Endothelial cell of umbilical vein (primary cell): ENCODE measurements at regions of chr10 and their contacts with region 1.

Region 1: GRCh38 chr10:103888113-103888841 is 29.7 kb downstream of the STN1 start:
- DNase-seq: peak; percentile 93
- H3K4me3 ChIP-seq: no peak overlapping the region
- H3K27ac ChIP-seq: peak overlapping the region; percentile 33
- H3K4me1 ChIP-seq: peaks cover 22% of the 10 kb centered on the region
- H3K27me3 ChIP-seq: no peaks in the 10 kb centered on the region
- CTCF ChIP-seq: peak; percentile 68 to 73
- POLR2A ChIP-seq: no peak

Region 2: DNA sequence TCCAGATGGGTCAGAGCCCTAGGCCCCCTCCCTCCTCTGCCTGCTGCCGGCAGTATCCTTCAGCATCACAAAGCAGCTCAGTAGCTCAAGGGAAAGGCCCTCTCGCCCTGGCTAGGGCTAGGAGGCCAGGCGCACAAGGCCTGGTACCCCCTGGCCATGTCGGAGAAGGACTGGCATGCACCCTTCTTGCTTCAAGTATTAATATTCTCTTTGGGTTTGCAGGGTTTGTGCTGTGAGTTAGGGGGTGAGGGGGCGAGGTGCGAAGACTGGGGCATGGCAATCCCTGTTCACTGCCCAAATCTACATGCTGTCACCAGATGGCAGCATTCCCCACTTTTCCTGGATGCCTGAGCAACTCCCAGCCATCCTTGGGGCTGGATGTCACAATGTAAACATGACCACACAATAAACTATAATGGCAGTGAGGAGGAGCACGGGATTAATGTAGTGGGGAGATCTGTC is 289.6 kb before region 1 on chr10:
- CTCF ChIA-PET with region 1: interaction called, 5 read pairs
- POLR2A ChIA-PET with region 1: no interaction called
- dilution Hi-C with region 1: no loop called
- intact Hi-C with region 1: loop called (anchors 1 kb)
- DNase-seq: peak; percentile 70
- H3K4me3 ChIP-seq: no peak overlapping the region
- H3K27ac ChIP-seq: no peak overlapping the region
- H3K4me1 ChIP-seq: peaks cover 17% of the 10 kb centered on the region
- H3K27me3 ChIP-seq: no peaks in the 10 kb centered on the region
- CTCF ChIP-seq: peak; percentile 78
- POLR2A ChIP-seq: no peak

Region 3: DNA sequence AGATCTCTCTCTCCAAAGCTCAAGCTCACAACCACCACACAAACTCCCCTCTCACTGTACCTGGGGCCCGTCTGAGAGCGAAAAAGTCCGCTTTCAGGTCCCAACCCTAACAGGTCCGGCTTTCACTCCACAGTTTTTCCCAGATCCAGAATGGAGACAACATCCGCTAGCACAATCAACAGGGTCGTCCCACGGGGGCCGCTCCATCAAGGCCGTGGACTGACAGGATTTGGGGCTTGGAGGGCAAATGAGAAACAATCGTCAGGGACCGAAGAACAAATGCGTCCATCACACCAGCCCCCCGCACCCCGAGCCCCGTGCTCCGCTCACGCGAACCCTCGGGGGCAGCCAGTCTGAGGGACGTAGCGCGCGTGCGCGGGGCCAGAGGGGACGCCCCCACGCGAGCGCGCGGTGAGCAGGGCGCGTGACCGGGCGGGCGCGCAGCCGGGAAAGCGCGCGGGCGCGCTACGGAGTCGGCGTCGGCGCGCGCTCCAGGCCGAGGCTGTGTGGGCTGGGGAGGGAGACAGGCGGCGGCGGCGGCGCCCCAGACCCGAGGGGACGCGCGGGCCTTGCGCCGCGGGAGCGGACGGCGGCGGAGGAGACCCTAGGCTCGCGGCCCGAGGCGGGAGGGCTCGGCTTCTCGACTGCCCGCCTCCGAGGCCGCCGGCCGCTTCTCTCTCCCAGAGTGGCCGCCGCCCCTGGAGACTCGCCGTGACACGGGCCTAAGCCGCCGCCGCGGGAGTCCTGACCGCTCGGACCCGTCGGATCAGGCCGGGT is 78.6 kb after region 1 on chr10 and contains the start of gene SLK:
- CTCF ChIA-PET with region 1: interaction called, 20 read pairs
- POLR2A ChIA-PET with region 1: interaction called, 3 read pairs
- dilution Hi-C with region 1: no loop called
- intact Hi-C with region 1: loop called (anchors 1 kb)
- DNase-seq: peak; percentile 86
- H3K4me3 ChIP-seq: peak within 1 kb of the TSS; percentile 81 to 99 (median 97)
- H3K27ac ChIP-seq: peak within 1 kb of the TSS; percentile 73
- H3K4me1 ChIP-seq: peaks cover 26% of the 10 kb centered on the region
- H3K27me3 ChIP-seq: no peaks in the 10 kb centered on the region
- CTCF ChIP-seq: no peak
- POLR2A ChIP-seq: peak; percentile 83
- total RNA-seq, gene SLK: 31.8 and 36.0 TPM in 2 replicates

Region 4: GRCh38 chr10:104028146-104028545 is 139.9 kb after region 1 on chr10:
- CTCF ChIA-PET with region 1: interaction called, 16 read pairs
- POLR2A ChIA-PET with region 1: no interaction called
- dilution Hi-C with region 1: no loop called
- intact Hi-C with region 1: no loop called
- DNase-seq: no peak
- H3K4me3 ChIP-seq: no peak overlapping the region
- H3K27ac ChIP-seq: no peak overlapping the region
- H3K4me1 ChIP-seq: peaks cover 13% of the 10 kb centered on the region
- H3K27me3 ChIP-seq: no peaks in the 10 kb centered on the region
- CTCF ChIP-seq: peak; percentile 19 to 36
- POLR2A ChIP-seq: no peak

Region 5: GRCh38 chr10:104080762-104081161 is 192.5 kb after region 1 on chr10:
- CTCF ChIA-PET with region 1: interaction called, 12 read pairs
- POLR2A ChIA-PET with region 1: no interaction called
- dilution Hi-C with region 1: no loop called
- intact Hi-C with region 1: loop called (anchors 1 kb)
- DNase-seq: peak; percentile 45
- H3K4me3 ChIP-seq: no peak overlapping the region
- H3K27ac ChIP-seq: no peak overlapping the region
- H3K4me1 ChIP-seq: peaks cover 18% of the 10 kb centered on the region
- H3K27me3 ChIP-seq: no peaks in the 10 kb centered on the region
- CTCF ChIP-seq: peak; percentile 46 to 49
- POLR2A ChIP-seq: no peak

Region 6: DNA sequence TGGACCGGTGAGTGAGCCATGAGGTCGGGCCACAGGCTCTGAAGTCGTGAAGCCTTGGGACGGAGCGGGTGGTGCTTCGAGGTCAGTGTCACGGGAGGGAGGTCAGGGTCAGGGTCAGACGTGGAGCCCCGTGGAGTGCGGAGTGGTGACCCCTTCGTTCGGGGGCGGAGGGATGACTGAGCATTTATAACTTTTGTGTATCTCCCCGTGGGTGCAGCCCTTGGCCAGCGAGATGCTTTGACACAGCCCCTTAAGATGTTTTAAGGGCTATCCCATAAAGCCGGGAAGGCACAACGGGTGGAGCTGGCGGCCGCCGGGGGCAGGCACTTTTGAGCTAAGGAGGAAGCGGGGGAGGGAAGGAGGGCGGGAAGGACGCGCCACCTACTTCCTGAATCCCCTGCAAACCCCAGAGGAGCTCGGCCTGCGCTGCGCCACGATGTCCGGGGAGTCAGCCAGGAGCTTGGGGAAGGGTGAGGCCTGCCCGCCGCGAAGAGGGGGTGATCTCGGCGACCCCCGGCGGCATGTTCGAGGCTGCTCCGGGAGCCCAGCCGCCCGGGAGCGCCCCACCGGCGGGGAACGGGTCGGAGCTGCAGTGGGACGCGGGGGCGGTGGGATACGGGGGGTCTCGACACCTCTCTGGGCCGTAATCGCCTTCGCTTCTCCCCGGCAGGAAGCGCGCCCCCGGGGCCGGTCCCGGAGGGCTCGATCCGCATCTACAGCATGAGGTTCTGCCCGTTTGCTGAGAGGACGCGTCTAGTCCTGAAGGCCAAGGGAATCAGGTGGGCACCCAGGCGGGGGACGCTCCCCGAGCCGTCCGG is 366.4 kb after region 1 on chr10 and contains the start of gene GSTO1:
- CTCF ChIA-PET with region 1: interaction called, 8 read pairs
- POLR2A ChIA-PET with region 1: interaction called, 5 read pairs
- dilution Hi-C with region 1: no loop called
- intact Hi-C with region 1: loop called (anchors 5 kb)
- DNase-seq: peak; percentile 64
- H3K4me3 ChIP-seq: peak within 1 kb of the TSS; percentile 65 to 99 (median 82)
- H3K27ac ChIP-seq: peak within 1 kb of the TSS; percentile 99
- H3K4me1 ChIP-seq: peaks cover 44% of the 10 kb centered on the region
- H3K27me3 ChIP-seq: peaks cover 2% of the 10 kb centered on the region in 2 experiments
- CTCF ChIP-seq: no peak
- POLR2A ChIP-seq: peak; percentile 83
- total RNA-seq, gene GSTO1: 195 and 211 TPM in 2 replicates

Region 7: DNA sequence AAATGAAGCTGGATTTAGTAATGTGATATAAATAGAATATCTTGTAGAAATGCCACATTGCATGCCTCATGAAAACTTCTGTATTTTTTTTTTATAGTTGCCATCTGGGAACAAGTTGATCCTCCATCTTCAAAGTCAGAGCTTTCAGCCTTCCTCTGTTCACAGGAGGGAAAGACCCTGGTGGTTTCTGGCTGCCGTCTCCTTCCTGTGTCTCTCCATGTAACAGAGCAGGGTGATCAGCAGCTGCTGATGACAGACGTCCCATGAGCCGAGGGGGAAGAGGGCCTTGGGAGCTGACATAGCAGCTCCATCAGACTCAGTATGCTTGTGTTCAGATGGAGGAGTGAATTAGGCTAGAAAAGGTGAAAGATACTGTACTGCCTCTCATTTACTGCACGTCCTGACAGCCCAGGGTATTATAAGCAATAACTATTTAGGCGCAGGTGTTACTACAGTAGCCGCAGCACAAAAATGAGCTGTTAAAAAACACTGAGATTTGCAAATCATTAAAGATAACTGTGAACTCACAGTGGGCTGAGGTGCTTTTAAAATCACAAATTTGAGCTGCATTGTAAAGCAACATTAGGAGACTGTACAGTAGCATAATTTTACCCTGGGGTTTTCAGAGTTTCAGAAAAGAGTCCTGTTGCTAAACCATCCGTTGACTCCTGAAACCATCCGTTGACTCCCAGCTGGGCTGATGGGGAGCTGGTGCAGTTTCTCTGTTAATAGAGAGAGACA is 568.7 kb after region 1 on chr10:
- CTCF ChIA-PET with region 1: no interaction called
- POLR2A ChIA-PET with region 1: no interaction called
- dilution Hi-C with region 1: no loop called
- intact Hi-C with region 1: no loop called
- DNase-seq: no peak
- H3K4me3 ChIP-seq: no peak overlapping the region
- H3K27ac ChIP-seq: no peak overlapping the region
- H3K4me1 ChIP-seq: no peaks in the 10 kb centered on the region
- H3K27me3 ChIP-seq: no peaks in the 10 kb centered on the region
- CTCF ChIP-seq: no peak
- POLR2A ChIP-seq: no peak